Heart left ventricle (tissue), 16 donors: ENCODE measurements at regions of chr1 and their contacts with region 1.

Region 1: GRCh38 chr1:8858888-8859706 is 19.4 kb downstream of the ENO1 start:
- DNase-seq: no peak
- ATAC-seq: peak in 3 of 4 donors; percentile 17 to 35 (median 26)
- H3K4me3 ChIP-seq: no peak overlapping the region
- H3K27ac ChIP-seq: peak overlapping the region in 10 of 12 donors; percentile 6 to 64 (median 43)
- H3K4me1 ChIP-seq: peaks cover 0 to 29% (median 22%) of the 10 kb centered on the region in 12 donors
- H3K27me3 ChIP-seq: no peaks in the 10 kb centered on the region
- CTCF ChIP-seq: peak; percentile 41 to 79 (median 61)
- POLR2A ChIP-seq: no peak

Region 2: DNA sequence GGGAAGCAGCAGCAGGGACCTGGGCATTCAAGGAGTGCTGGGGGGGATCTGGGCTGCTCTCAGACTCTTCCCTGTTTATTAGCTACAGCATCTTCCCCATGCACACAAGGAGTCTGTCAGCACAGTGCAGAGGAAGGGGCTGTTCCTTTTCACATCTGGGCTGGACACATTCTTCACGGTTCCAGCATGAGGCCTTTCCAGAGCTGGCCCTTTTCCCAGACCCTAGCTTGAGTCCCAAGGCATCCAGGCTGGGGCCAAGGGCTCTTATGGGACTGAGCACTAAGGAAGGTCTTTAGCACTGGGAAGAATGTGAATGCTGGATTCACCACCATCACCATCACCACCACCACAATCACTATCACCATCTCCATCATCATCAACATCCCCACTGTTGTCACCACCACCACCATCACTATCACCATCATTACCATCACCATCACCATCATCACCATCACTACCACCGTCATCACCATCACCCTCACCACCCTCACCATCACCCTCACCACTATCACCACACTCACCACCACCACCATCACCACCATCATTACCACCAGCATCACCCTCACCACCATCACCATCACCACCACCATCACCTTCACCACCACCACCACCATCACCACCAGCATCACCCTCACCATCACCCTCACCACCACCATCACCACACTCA is 869.2 kb before region 1 on chr1:
- intact Hi-C with region 1: loop called in 1 of 10 experiments (anchors 10 kb)
- DNase-seq: no peak
- ATAC-seq: peak; percentile 26 to 38 (median 30)
- H3K4me3 ChIP-seq: no peak overlapping the region
- H3K27ac ChIP-seq: no peak overlapping the region
- H3K4me1 ChIP-seq: peaks cover 0 to 14% (median 0%) of the 10 kb centered on the region in 12 donors
- H3K27me3 ChIP-seq: no peaks in the 10 kb centered on the region
- CTCF ChIP-seq: no peak
- POLR2A ChIP-seq: no peak

Region 3: GRCh38 chr1:8702850-8703810 is 156.0 kb before region 1 on chr1:
- intact Hi-C with region 1: no loop called
- DNase-seq: peak; percentile 90 to 95 (median 94)
- ATAC-seq: peak; percentile 83 to 98 (median 96)
- H3K4me3 ChIP-seq: peak overlapping the region; percentile 52 to 86 (median 72)
- H3K27ac ChIP-seq: peak overlapping the region; percentile 28 to 93 (median 86)
- H3K4me1 ChIP-seq: peaks cover 3 to 66% (median 43%) of the 10 kb centered on the region in 12 donors
- H3K27me3 ChIP-seq: no peaks in the 10 kb centered on the region
- CTCF ChIP-seq: peak in 6 of 12 donors; percentile 18 to 43 (median 24)
- POLR2A ChIP-seq: peak in 1 of 2 donors; percentile 77

Region 4: GRCh38 chr1:8809342-8809736 is 49.8 kb before region 1 on chr1:
- intact Hi-C with region 1: loop called in 1 of 10 experiments (anchors 10 kb)
- DNase-seq: no peak
- ATAC-seq: no peak
- H3K4me3 ChIP-seq: no peak overlapping the region
- H3K27ac ChIP-seq: no peak overlapping the region
- H3K4me1 ChIP-seq: peaks cover 0 to 19% (median 10%) of the 10 kb centered on the region in 12 donors
- H3K27me3 ChIP-seq: no peaks in the 10 kb centered on the region
- CTCF ChIP-seq: no peak
- POLR2A ChIP-seq: no peak

Region 5: GRCh38 chr1:8825985-8826481 is 33.1 kb before region 1 on chr1:
- intact Hi-C with region 1: no loop called
- DNase-seq: peak in 3 of 5 donors; percentile 29 to 56 (median 39)
- ATAC-seq: peak in 3 of 4 donors; percentile 57 to 62 (median 57)
- H3K4me3 ChIP-seq: no peak overlapping the region
- H3K27ac ChIP-seq: no peak overlapping the region
- H3K4me1 ChIP-seq: peaks cover 0 to 26% (median 14%) of the 10 kb centered on the region in 12 donors
- H3K27me3 ChIP-seq: no peaks in the 10 kb centered on the region
- CTCF ChIP-seq: no peak
- POLR2A ChIP-seq: no peak

Region 6: GRCh38 chr1:8873506-8874229 is 14.6 kb after region 1 on chr1:
- intact Hi-C with region 1: loop called in 1 of 10 experiments (anchors 2 kb)
- DNase-seq: peak; percentile 69 to 93 (median 73)
- ATAC-seq: peak in 3 of 4 donors; percentile 65 to 76 (median 69)
- H3K4me3 ChIP-seq: peak overlapping the region in 1 of 12 donors; percentile 6
- H3K27ac ChIP-seq: peak overlapping the region in 11 of 12 donors; percentile 12 to 100 (median 38)
- H3K4me1 ChIP-seq: peaks cover 7 to 67% (median 48%) of the 10 kb centered on the region in 12 donors
- H3K27me3 ChIP-seq: no peaks in the 10 kb centered on the region
- CTCF ChIP-seq: no peak
- POLR2A ChIP-seq: no peak